Activated CD4-positive, alpha-beta T cell treated with anti-CD3 and anti-CD28 coated beads for 36 hours (primary cell): ENCODE measurements at regions of chr7 and their contacts with region 1.

Region 1: GRCh38 chr7:27160546-27161213 is 4.2 kb upstream of the HOXA7 start:
- DNase-seq: peak; percentile 91
- ATAC-seq: peak; percentile 50
- H3K4me3 Mint-ChIP-seq: peak overlapping the region; percentile 62
- H3K27ac Mint-ChIP-seq: no peak overlapping the region
- H3K4me1 Mint-ChIP-seq: peaks cover 24% of the 10 kb centered on the region
- H3K27me3 Mint-ChIP-seq: peaks cover 74% of the 10 kb centered on the region

Region 2: DNA sequence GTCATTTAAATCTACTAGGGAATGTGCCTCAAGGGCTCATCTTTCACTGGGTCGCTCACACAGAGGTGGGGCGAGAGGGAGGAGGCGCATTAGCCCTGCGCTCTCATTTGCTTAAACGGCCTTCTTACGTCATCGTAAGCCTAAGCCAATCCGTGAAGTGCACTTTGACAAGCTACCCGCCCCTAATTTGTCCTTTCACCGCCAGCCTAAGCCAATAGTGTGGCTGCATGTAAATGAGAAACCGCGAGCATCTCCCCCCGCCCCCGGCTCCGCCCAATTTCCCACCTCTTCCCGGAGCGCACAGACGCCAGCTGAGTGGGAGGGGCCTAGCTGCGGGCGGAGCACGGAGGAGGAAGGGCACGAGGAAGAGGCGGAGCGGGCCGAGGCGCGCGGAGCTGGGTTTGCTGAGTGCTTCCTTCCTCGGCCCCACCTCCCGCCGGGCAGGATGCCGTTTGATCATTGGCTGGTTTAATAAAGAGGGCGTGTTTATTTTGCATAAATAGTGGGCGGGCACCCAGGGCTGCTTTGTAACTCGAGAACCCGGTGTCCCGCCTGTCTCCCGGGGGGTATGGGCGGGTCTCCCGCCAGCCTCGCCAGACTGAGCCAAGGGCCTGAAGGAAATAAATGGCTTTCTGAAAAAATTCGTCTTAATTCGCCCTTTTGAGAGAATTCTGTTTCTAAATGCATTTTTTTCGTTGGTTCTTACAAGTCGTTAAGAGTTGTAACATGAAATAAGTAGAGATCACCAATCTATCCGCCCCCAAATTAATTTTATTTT is 1298.2 kb before region 1 on chr7:
- CTCF ChIA-PET with region 1: no interaction called
- POLR2A ChIA-PET with region 1: no interaction called
- intact Hi-C with region 1: loop called (anchors 2 to 5 kb)
- DNase-seq: peak; percentile 99
- ATAC-seq: peak; percentile 94
- H3K4me3 Mint-ChIP-seq: peak overlapping the region; percentile 68
- H3K27ac Mint-ChIP-seq: peak overlapping the region; percentile 69
- H3K4me1 Mint-ChIP-seq: peaks cover 26% of the 10 kb centered on the region
- H3K27me3 Mint-ChIP-seq: peaks cover 46% of the 10 kb centered on the region

Region 3: GRCh38 chr7:26670290-26670689 is 490.4 kb before region 1 on chr7:
- CTCF ChIA-PET with region 1: no interaction called
- POLR2A ChIA-PET with region 1: no interaction called
- intact Hi-C with region 1: no loop called
- DNase-seq: no peak
- ATAC-seq: no peak
- H3K4me3 Mint-ChIP-seq: no peak overlapping the region
- H3K27ac Mint-ChIP-seq: no peak overlapping the region
- H3K4me1 Mint-ChIP-seq: peaks cover 7% of the 10 kb centered on the region
- H3K27me3 Mint-ChIP-seq: peaks cover 13% of the 10 kb centered on the region

Region 4: GRCh38 chr7:26686448-26686981 is 474.2 kb before region 1 on chr7:
- CTCF ChIA-PET with region 1: interaction called, 7 read pairs
- POLR2A ChIA-PET with region 1: no interaction called
- intact Hi-C with region 1: loop called (anchors 1 kb)
- DNase-seq: no peak
- ATAC-seq: no peak
- H3K4me3 Mint-ChIP-seq: no peak overlapping the region
- H3K27ac Mint-ChIP-seq: no peak overlapping the region
- H3K4me1 Mint-ChIP-seq: no peaks in the 10 kb centered on the region
- H3K27me3 Mint-ChIP-seq: peaks cover 16% of the 10 kb centered on the region

Region 5: GRCh38 chr7:26853788-26854393 is 306.8 kb before region 1 on chr7:
- CTCF ChIA-PET with region 1: interaction called, 25 read pairs
- POLR2A ChIA-PET with region 1: no interaction called
- intact Hi-C with region 1: loop called (anchors 1 kb)
- DNase-seq: no peak
- ATAC-seq: no peak
- H3K4me3 Mint-ChIP-seq: no peak overlapping the region
- H3K27ac Mint-ChIP-seq: no peak overlapping the region
- H3K4me1 Mint-ChIP-seq: peaks cover 9% of the 10 kb centered on the region
- H3K27me3 Mint-ChIP-seq: peaks cover 36% of the 10 kb centered on the region

Region 6: GRCh38 chr7:27110186-27111031 is 50.3 kb before region 1 on chr7:
- CTCF ChIA-PET with region 1: no interaction called
- POLR2A ChIA-PET with region 1: no interaction called
- intact Hi-C with region 1: no loop called
- DNase-seq: no peak
- ATAC-seq: no peak
- H3K4me3 Mint-ChIP-seq: no peak overlapping the region
- H3K27ac Mint-ChIP-seq: no peak overlapping the region
- H3K4me1 Mint-ChIP-seq: no peaks in the 10 kb centered on the region
- H3K27me3 Mint-ChIP-seq: peaks cover 18% of the 10 kb centered on the region

Region 7: GRCh38 chr7:27141923-27142579 is 18.6 kb before region 1 on chr7:
- CTCF ChIA-PET with region 1: no interaction called
- POLR2A ChIA-PET with region 1: no interaction called
- intact Hi-C with region 1: no loop called
- DNase-seq: no peak
- ATAC-seq: no peak
- H3K4me3 Mint-ChIP-seq: no peak overlapping the region
- H3K27ac Mint-ChIP-seq: no peak overlapping the region
- H3K4me1 Mint-ChIP-seq: no peaks in the 10 kb centered on the region
- H3K27me3 Mint-ChIP-seq: peaks cover 29% of the 10 kb centered on the region

Region 8: GRCh38 chr7:27172823-27173510 is 12.3 kb after region 1 on chr7:
- CTCF ChIA-PET with region 1: interaction called, 6 read pairs
- POLR2A ChIA-PET with region 1: no interaction called
- intact Hi-C with region 1: loop called (anchors 2 kb)
- DNase-seq: peak; percentile 31
- ATAC-seq: peak; percentile 14
- H3K4me3 Mint-ChIP-seq: no peak overlapping the region
- H3K27ac Mint-ChIP-seq: no peak overlapping the region
- H3K4me1 Mint-ChIP-seq: peaks cover 15% of the 10 kb centered on the region
- H3K27me3 Mint-ChIP-seq: peaks cover 56% of the 10 kb centered on the region